Dendritic cell treated with granulocyte-macrophage colony-stimulating factor and Interleukin-4, amounts not matched to agents 40 ng/mL and 50 ng/mL, for 4 days (primary cell): ENCODE measurements at regions of chr6 and their contacts with region 1.

Region 1: DNA sequence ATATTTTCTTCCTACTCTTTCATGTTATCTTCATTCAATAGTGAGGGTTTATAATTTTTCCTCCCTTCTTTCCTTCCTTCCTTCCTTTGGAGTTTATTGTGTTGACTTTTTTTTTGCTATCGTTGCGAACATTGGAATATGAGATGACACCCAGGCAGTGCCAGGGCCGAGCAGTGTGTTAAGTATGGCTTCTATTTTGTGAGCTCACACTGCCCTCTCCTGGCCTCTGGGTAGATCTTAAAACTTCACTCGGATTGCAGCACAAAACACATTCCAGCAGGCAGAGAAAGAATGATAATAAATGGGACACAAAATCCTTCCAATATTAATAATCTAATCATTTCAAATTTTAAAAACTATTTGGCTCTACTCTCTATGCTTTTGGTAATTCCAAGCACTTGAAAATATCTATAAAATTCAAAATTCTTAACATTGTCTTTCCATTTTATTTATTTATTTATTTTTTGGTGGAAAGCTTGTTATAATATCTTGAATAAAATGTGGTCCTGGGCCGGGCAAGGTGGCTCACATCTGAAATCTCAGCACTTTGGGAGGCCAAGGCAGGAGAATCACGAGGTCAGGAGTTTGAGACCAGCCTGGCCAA is 147.4 kb upstream of the OLIG3 start:
- H3K4me3 Mint-ChIP-seq: no peak overlapping the region
- H3K27ac Mint-ChIP-seq: no peak overlapping the region
- H3K4me1 Mint-ChIP-seq: peaks cover 3% of the 10 kb centered on the region
- H3K27me3 Mint-ChIP-seq: peaks cover 7% of the 10 kb centered on the region

Region 2: GRCh38 chr6:137076277-137077068 is 565.1 kb before region 1 on chr6:
- intact Hi-C with region 1: loop called (anchors 5 kb)
- H3K4me3 Mint-ChIP-seq: no peak overlapping the region
- H3K27ac Mint-ChIP-seq: no peak overlapping the region
- H3K4me1 Mint-ChIP-seq: no peaks in the 10 kb centered on the region
- H3K27me3 Mint-ChIP-seq: peaks cover 26% of the 10 kb centered on the region

Region 3: DNA sequence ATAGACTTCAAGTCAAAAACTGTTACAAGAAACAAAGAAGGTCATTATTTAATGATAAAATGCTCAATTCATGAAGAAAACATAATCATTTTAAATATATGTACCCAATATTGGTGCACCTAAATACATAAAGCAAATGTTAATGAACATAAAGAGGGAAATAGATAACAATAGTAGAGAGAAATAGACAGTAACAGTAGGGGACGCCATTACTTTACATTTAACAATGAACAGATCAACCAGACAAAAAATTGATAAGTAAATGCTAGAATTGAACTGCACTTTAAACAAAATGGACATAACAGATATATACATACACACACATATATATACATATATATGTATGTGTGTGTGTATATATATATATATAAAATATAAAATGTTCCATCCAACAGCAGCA is 505.5 kb before region 1 on chr6:
- intact Hi-C with region 1: loop called (anchors 1 kb)
- H3K4me3 Mint-ChIP-seq: no peak overlapping the region
- H3K27ac Mint-ChIP-seq: no peak overlapping the region
- H3K4me1 Mint-ChIP-seq: peaks cover 16% of the 10 kb centered on the region
- H3K27me3 Mint-ChIP-seq: peaks cover 7% of the 10 kb centered on the region

Region 4: DNA sequence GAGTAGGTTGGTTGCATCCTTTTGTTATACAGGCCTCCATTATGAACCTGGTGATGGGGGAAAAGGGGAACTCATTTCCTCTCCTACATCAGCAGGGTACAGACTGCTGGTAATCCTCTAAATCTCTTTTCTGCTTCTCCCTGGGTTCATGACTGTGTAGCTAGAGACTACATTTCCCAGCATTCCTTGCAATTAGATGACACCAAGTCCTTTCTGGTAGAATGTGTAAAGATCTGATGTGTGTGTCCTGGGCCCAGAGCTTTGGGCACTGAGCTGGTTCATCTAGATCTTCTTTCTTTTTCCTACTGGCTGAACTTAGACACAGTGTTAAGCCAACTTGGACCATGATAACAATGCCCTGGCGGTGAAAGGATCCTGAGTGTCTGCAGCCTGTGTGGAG is 317.7 kb before region 1 on chr6:
- intact Hi-C with region 1: loop called (anchors 10 kb)
- H3K4me3 Mint-ChIP-seq: no peak overlapping the region
- H3K27ac Mint-ChIP-seq: no peak overlapping the region
- H3K4me1 Mint-ChIP-seq: no peaks in the 10 kb centered on the region
- H3K27me3 Mint-ChIP-seq: peaks cover 1% of the 10 kb centered on the region